ENCODE measurements at regions of chr11 and their contacts with region 1.

Region 1: GRCh38 chr11:130390071-130390758 is 38.2 kb downstream of the ADAMTS8 start:
- DNase-seq: no peak
- H3K4me3 ChIP-seq: no peak overlapping the region
- H3K27ac ChIP-seq: no peak overlapping the region
- H3K4me1 ChIP-seq: peaks cover 0 to 10% (median 5%) of the 10 kb centered on the region in 4 donors
- H3K27me3 ChIP-seq: no peaks in the 10 kb centered on the region
- CTCF ChIP-seq: peak; percentile 28 to 45

Region 2: DNA sequence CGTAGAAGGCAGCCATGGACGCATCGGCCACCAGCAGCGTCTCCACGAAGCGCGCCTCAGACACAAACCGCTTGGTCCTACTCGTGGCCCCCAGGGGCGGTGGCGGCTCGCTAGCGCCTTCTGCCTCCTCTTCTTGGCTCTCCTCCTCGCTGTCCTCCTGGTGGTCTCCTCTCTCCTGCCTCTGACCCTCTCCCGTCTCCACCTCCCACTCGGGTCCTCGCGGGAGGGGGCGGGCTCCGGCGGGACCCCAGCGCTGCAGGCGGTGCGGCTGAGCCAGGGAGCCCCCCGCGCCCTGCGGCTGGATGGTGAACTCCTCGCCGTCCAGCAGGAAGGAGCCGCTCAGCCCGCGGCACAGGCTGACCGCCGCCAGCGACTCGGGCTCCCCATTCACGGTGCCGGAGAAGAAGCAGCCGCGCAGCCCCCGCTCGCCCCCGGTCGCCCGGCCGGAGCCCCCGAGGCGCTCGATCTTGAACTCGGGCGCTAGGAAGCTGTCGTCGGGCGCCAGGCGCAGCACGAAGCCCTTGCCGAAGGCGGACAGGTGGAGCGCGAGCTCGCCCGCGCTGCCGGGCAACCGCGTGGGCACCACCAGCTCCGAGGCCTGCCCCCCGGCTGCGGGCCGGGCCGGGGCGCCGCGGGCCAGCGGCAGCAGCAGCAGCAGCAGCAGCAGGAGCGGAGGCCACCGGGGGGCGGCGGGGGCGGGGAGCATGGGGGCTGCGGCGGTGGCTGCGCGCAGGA is 37.5 kb after region 1 on chr11:
- intact Hi-C with region 1: loop called (anchors 5 kb)
- DNase-seq: no peak
- H3K4me3 ChIP-seq: peak overlapping the region; percentile 52 to 69
- H3K27ac ChIP-seq: peak overlapping the region; percentile 52 to 58
- H3K4me1 ChIP-seq: peaks cover 0 to 37% (median 20%) of the 10 kb centered on the region in 4 donors
- H3K27me3 ChIP-seq: peaks cover 0 to 3% of the 10 kb centered on the region in 2 donors
- CTCF ChIP-seq: peak; percentile 31 to 43

Measured in tibial artery (tissue), 4 donors.